Psoas muscle (tissue), 8 donors: ENCODE measurements at regions of chr13 and their contacts with region 1.

Region 1: GRCh38 chr13:47774671-47774994 is 226.4 kb downstream of the SUCLA2 start:
- DNase-seq: no peak
- ATAC-seq: no peak
- H3K4me3 ChIP-seq: no peak overlapping the region
- H3K27ac ChIP-seq: no peak overlapping the region
- H3K4me1 ChIP-seq: no peaks in the 10 kb centered on the region
- H3K27me3 ChIP-seq: no peaks in the 10 kb centered on the region
- CTCF ChIP-seq: no peak

Region 2: DNA sequence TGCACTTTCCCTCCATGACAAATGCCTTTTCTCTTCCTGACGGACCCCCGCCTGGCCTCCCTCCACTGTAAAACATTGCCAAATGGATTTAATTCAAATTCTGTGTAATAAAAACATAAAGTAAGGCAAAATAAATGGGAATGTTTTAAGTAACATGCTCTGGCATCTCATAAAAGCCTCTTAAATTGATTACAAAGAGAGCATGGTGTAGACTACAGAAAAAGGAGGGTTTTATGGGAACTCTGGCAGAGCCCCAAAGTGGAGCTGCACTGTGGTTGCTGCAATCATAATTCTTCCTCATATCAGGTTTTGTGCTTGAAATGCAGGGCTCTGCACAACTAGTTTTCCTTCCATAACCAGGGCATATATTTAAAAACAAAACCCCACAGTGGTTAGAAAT is 1878.8 kb before region 1 on chr13:
- intact Hi-C with region 1: no loop called
- DNase-seq: no peak
- ATAC-seq: no peak
- H3K4me3 ChIP-seq: no peak overlapping the region
- H3K27ac ChIP-seq: no peak overlapping the region
- H3K4me1 ChIP-seq: no peaks in the 10 kb centered on the region
- H3K27me3 ChIP-seq: peaks cover 0 to 6% (median 0%) of the 10 kb centered on the region in 3 donors
- CTCF ChIP-seq: no peak

Region 3: GRCh38 chr13:46831588-46832194 is 942.9 kb before region 1 on chr13:
- intact Hi-C with region 1: loop called (anchors 2 kb)
- DNase-seq: no peak
- ATAC-seq: peak in 1 of 4 donors; percentile 42
- H3K4me3 ChIP-seq: no peak overlapping the region
- H3K27ac ChIP-seq: no peak overlapping the region
- H3K4me1 ChIP-seq: no peaks in the 10 kb centered on the region
- H3K27me3 ChIP-seq: no peaks in the 10 kb centered on the region
- CTCF ChIP-seq: peak; percentile 76

Region 4: GRCh38 chr13:47598340-47598911 is 176.2 kb before region 1 on chr13:
- intact Hi-C with region 1: loop called in 1 of 2 experiments (anchors 10 kb)
- DNase-seq: no peak
- ATAC-seq: no peak
- H3K4me3 ChIP-seq: no peak overlapping the region
- H3K27ac ChIP-seq: no peak overlapping the region
- H3K4me1 ChIP-seq: no peaks in the 10 kb centered on the region
- H3K27me3 ChIP-seq: no peaks in the 10 kb centered on the region
- CTCF ChIP-seq: no peak

Region 5: DNA sequence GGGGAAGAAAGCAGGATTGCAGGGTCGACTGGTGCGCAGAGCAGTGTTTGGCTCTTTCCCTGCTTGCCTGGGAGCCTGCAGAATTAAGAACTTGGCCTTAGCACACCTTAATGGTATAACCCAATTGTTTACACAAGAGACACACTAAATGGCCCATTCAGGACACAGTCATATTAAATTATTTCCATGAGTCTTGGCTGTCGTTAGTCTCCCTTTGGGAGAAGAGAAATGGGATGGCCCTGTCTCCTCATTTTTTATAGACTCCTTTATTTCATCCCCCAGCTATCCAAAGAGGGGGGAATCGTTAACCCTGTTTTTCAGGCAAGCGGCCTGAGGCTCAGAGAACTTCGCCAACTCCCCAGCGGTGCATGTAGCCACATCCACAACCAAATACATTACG is 56.1 kb before region 1 on chr13:
- intact Hi-C with region 1: no loop called
- DNase-seq: no peak
- ATAC-seq: no peak
- H3K4me3 ChIP-seq: no peak overlapping the region
- H3K27ac ChIP-seq: no peak overlapping the region
- H3K4me1 ChIP-seq: no peaks in the 10 kb centered on the region
- H3K27me3 ChIP-seq: no peaks in the 10 kb centered on the region
- CTCF ChIP-seq: no peak